CD8-positive, alpha-beta T cell (primary cell): ENCODE measurements at regions of chr1 and their contacts with region 1.

Region 1: GRCh38 chr1:167401260-167401873 is 117.0 kb downstream of the CD247 start:
- DNase-seq: peak; percentile 4 to 79 (median 51)
- ATAC-seq: peak; percentile 73
- H3K4me3 ChIP-seq: no peak overlapping the region
- H3K4me3 Mint-ChIP-seq: no peak overlapping the region
- H3K27ac ChIP-seq: no peak overlapping the region
- H3K27ac Mint-ChIP-seq: no peak overlapping the region
- H3K4me1 ChIP-seq: no peaks in the 10 kb centered on the region
- H3K4me1 Mint-ChIP-seq: peaks cover 5% of the 10 kb centered on the region
- H3K27me3 ChIP-seq: no peaks in the 10 kb centered on the region
- H3K27me3 Mint-ChIP-seq: no peaks in the 10 kb centered on the region
- CTCF ChIP-seq: peak; percentile 36

Region 2: GRCh38 chr1:167270349-167271092 is 130.8 kb before region 1 on chr1:
- CTCF ChIA-PET with region 1: interaction called, 13 read pairs
- POLR2A ChIA-PET with region 1: no interaction called
- intact Hi-C with region 1: loop called in 1 of 2 experiments (anchors 2 kb)
- DNase-seq: no peak
- ATAC-seq: no peak
- H3K4me3 ChIP-seq: no peak overlapping the region
- H3K4me3 Mint-ChIP-seq: no peak overlapping the region
- H3K27ac ChIP-seq: no peak overlapping the region
- H3K27ac Mint-ChIP-seq: no peak overlapping the region
- H3K4me1 ChIP-seq: peaks cover 9% of the 10 kb centered on the region
- H3K4me1 Mint-ChIP-seq: peaks cover 43% of the 10 kb centered on the region
- H3K27me3 ChIP-seq: no peaks in the 10 kb centered on the region
- H3K27me3 Mint-ChIP-seq: no peaks in the 10 kb centered on the region
- CTCF ChIP-seq: no peak

Region 3: GRCh38 chr1:168216171-168216570 is 814.8 kb after region 1 on chr1:
- CTCF ChIA-PET with region 1: no interaction called
- POLR2A ChIA-PET with region 1: no interaction called
- intact Hi-C with region 1: loop called in 1 of 2 experiments (anchors 5 kb)
- DNase-seq: no peak
- ATAC-seq: no peak
- H3K4me3 ChIP-seq: no peak overlapping the region
- H3K4me3 Mint-ChIP-seq: no peak overlapping the region
- H3K27ac ChIP-seq: no peak overlapping the region
- H3K27ac Mint-ChIP-seq: no peak overlapping the region
- H3K4me1 ChIP-seq: no peaks in the 10 kb centered on the region
- H3K4me1 Mint-ChIP-seq: no peaks in the 10 kb centered on the region
- H3K27me3 ChIP-seq: no peaks in the 10 kb centered on the region
- H3K27me3 Mint-ChIP-seq: peaks cover 9% of the 10 kb centered on the region
- CTCF ChIP-seq: no peak